ENCODE measurements at regions of chr9 and their contacts with region 1.

Region 1: GRCh38 chr9:104104360-104104759 is 10.3 kb downstream of the SMC2 start:
- DNase-seq: no peak
- ATAC-seq: no peak
- H3K4me3 ChIP-seq: no peak overlapping the region
- H3K4me3 Mint-ChIP-seq: no peak overlapping the region
- H3K27ac ChIP-seq: no peak overlapping the region
- H3K27ac Mint-ChIP-seq: no peak overlapping the region
- H3K4me1 ChIP-seq: no peaks in the 10 kb centered on the region
- H3K4me1 Mint-ChIP-seq: no peaks in the 10 kb centered on the region
- H3K27me3 ChIP-seq: no peaks in the 10 kb centered on the region
- H3K27me3 Mint-ChIP-seq: no peaks in the 10 kb centered on the region
- CTCF ChIP-seq: no peak

Region 2: DNA sequence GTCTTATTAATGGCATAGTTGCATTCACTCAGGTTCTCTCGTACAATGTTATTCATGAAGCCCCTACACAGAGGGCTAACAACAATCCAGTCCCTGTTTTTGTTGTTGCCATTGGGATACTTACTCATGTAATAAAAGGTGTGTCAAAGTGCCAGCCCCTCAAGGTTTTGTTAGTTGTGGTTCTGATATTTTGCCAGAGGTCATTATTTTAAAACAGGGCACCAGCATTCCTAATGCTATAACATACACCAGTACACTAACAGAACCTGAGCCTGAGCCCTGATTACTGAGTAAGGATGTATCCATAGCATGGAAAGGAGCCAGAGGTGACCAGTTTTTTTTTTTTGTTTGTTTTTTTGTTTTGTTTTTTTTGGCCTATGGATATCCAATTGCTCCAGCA is 40.0 kb after region 1 on chr9:
- CTCF ChIA-PET with region 1: no interaction called
- POLR2A ChIA-PET with region 1: no interaction called
- intact Hi-C with region 1: no loop called
- DNase-seq: no peak
- ATAC-seq: no peak
- H3K4me3 ChIP-seq: no peak overlapping the region
- H3K4me3 Mint-ChIP-seq: no peak overlapping the region
- H3K27ac ChIP-seq: no peak overlapping the region
- H3K27ac Mint-ChIP-seq: no peak overlapping the region
- H3K4me1 ChIP-seq: no peaks in the 10 kb centered on the region
- H3K4me1 Mint-ChIP-seq: no peaks in the 10 kb centered on the region
- H3K27me3 ChIP-seq: no peaks in the 10 kb centered on the region
- H3K27me3 Mint-ChIP-seq: no peaks in the 10 kb centered on the region
- CTCF ChIP-seq: no peak

Region 3: DNA sequence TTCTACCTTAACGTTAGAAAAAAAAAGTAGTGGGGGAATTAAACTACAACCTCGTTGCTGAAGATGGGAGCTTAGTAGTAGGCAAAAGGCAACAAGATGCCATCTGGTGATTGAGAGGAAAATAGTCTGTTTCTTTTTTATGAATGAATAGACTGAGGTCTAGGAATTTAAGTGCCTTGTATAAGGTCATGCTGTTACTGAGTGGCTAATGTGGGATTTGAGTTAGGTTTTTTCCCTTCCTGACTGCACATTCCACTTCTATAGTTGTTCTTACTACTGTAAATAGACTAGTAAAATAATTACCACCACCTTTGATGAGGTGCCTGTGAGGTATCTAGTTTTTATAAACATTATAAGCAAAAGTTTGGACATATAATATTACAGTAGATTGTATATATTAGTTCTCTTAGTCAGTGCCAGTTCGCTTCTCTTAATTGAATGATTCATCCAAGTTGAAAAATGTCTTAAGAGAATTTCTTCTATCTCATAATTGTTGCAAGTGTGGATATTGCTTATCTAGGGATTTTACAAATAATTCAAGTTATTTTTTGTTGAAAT is 1362.6 kb after region 1 on chr9:
- CTCF ChIA-PET with region 1: no interaction called
- POLR2A ChIA-PET with region 1: no interaction called
- intact Hi-C with region 1: loop called in 1 of 2 experiments (anchors 5 kb)
- DNase-seq: no peak
- ATAC-seq: no peak
- H3K4me3 ChIP-seq: no peak overlapping the region
- H3K4me3 Mint-ChIP-seq: no peak overlapping the region
- H3K27ac ChIP-seq: no peak overlapping the region
- H3K27ac Mint-ChIP-seq: no peak overlapping the region
- H3K4me1 ChIP-seq: no peaks in the 10 kb centered on the region
- H3K4me1 Mint-ChIP-seq: no peaks in the 10 kb centered on the region
- H3K27me3 ChIP-seq: no peaks in the 10 kb centered on the region
- H3K27me3 Mint-ChIP-seq: no peaks in the 10 kb centered on the region
- CTCF ChIP-seq: no peak

Measured in CD4-positive, alpha-beta T cell (primary cell).